Sciatic nerve (tissue), 2 donors: ENCODE measurements at regions of chr20 and their contacts with region 1.

Region 1: GRCh38 chr20:1325173-1326030 is 3.5 kb downstream of the SDCBP2 start:
- DNase-seq: peak; percentile 99
- ATAC-seq: peak; percentile 97

Region 2: DNA sequence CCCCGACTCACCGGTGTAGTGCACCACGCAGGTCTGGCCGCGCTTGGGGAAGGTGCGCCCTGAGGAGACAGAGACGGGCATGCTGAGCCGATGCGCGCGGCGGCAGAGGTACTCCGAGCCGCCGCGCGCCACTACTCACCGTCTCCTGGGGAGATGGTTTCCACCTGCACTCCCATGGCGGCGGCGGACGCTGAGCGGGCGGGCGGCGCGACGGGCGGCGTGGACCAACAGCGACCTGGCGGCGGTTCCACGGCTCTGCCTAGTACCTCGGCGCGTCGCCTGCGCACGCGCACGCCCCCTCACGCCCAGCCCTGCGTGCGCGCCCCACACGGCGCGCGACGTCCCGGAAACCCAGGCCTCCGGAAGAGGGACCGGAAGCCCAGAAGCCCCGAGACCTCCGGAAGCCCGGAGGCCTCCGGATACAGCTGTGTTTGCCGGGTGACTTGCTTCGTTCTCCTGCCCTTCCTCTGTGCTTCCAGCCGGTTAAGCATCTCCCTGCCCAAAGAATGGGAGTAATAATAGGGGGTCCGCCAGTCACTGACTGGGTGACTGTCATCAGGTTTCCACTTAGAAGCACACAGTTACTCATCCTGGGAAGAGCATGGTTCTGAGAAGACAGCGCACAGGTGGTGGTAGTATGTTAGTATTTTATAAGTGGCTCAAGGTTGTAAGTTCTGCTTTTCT is 67.6 kb after region 1 on chr20 and contains the start of gene FKBP1A:
- intact Hi-C with region 1: loop called (anchors 5 kb)
- DNase-seq: peak; percentile 93
- ATAC-seq: peak; percentile 97
- total RNA-seq, gene FKBP1A: 242 TPM

Region 3: GRCh38 chr20:1734269-1734858 is 409.0 kb after region 1 on chr20:
- intact Hi-C with region 1: no loop called
- DNase-seq: no peak
- ATAC-seq: peak; percentile 61